CD4-positive, alpha-beta T cell (primary cell): ENCODE measurements at regions of chr2 and their contacts with region 1.

Region 1: GRCh38 chr2:197209742-197210408 is 100.7 kb downstream of the ANKRD44 start:
- DNase-seq: peak in 7 of 14 experiments; percentile 25 to 79 (median 45)
- ATAC-seq: peak; percentile 8
- H3K4me3 ChIP-seq: peak overlapping the region; percentile 15
- H3K4me3 Mint-ChIP-seq: peak overlapping the region; percentile 73
- H3K27ac ChIP-seq: peak overlapping the region; percentile 79 to 86
- H3K27ac Mint-ChIP-seq: peak overlapping the region; percentile 98
- H3K4me1 ChIP-seq: peaks cover 86% of the 10 kb centered on the region
- H3K4me1 Mint-ChIP-seq: peaks cover 98% of the 10 kb centered on the region
- H3K27me3 ChIP-seq: no peaks in the 10 kb centered on the region
- H3K27me3 Mint-ChIP-seq: no peaks in the 10 kb centered on the region
- CTCF ChIP-seq: no peak

Region 2: DNA sequence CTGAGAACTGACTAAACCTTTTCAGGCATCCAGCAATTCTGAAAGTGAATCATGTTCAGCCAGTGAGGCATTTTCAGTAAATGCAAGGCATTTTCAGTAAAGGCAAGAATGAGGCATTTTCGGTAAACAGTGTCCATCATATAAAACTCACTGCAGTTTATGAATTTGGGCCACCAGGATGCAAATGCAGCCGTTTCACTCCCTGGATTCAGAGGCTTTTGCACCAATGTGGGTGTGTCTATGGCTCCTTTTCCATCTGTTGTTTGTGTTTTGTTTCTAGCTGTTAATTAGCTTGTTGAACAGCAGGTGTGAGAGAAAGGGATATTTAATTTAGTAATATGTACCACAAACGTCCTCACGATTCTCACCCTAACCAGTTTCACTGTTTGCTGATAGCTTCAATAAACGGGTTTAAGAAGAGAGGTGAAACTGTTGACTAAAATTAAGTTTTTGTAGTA is 167.1 kb before region 1 on chr2:
- CTCF ChIA-PET with region 1: no interaction called
- POLR2A ChIA-PET with region 1: no interaction called
- intact Hi-C with region 1: no loop called
- DNase-seq: no peak
- ATAC-seq: no peak
- H3K4me3 ChIP-seq: no peak overlapping the region
- H3K4me3 Mint-ChIP-seq: no peak overlapping the region
- H3K27ac ChIP-seq: no peak overlapping the region
- H3K27ac Mint-ChIP-seq: peak overlapping the region; percentile 52
- H3K4me1 ChIP-seq: no peaks in the 10 kb centered on the region
- H3K4me1 Mint-ChIP-seq: peaks cover 43% of the 10 kb centered on the region
- H3K27me3 ChIP-seq: no peaks in the 10 kb centered on the region
- H3K27me3 Mint-ChIP-seq: no peaks in the 10 kb centered on the region
- CTCF ChIP-seq: no peak

Region 3: GRCh38 chr2:197229509-197230443 is 19.9 kb after region 1 on chr2:
- CTCF ChIA-PET with region 1: interaction called, 5 read pairs
- POLR2A ChIA-PET with region 1: interaction called, 15 read pairs
- intact Hi-C with region 1: loop called in 1 of 2 experiments (anchors 2 kb)
- DNase-seq: no peak
- ATAC-seq: no peak
- H3K4me3 ChIP-seq: no peak overlapping the region
- H3K4me3 Mint-ChIP-seq: peak overlapping the region; percentile 36
- H3K27ac ChIP-seq: no peak overlapping the region
- H3K27ac Mint-ChIP-seq: peak overlapping the region; percentile 91
- H3K4me1 ChIP-seq: peaks cover 76% of the 10 kb centered on the region
- H3K4me1 Mint-ChIP-seq: peaks cover 96% of the 10 kb centered on the region
- H3K27me3 ChIP-seq: no peaks in the 10 kb centered on the region
- H3K27me3 Mint-ChIP-seq: no peaks in the 10 kb centered on the region
- CTCF ChIP-seq: no peak